ENCODE measurements at regions of chr17 and their contacts with region 1.

Region 1: GRCh38 chr17:81702971-81703746 is at the start of gene MRPL12:
- DNase-seq: peak; percentile 72 to 92
- H3K4me3 ChIP-seq: peak within 1 kb of the TSS; percentile 76 to 96 (median 95)
- H3K27ac ChIP-seq: peak within 1 kb of the TSS; percentile 92
- H3K4me1 ChIP-seq: peaks cover 0 to 14% (median 10%) of the 10 kb centered on the region in 4 experiments; a peak in 5 of 7 replicates
- H3K27me3 ChIP-seq: no peaks in the 10 kb centered on the region
- CTCF ChIP-seq: peak in 1 of 3 experiments; percentile 18; a peak in 1 of 4 replicates
- EP300 ChIP-seq: no peak
- POLR2A ChIP-seq: peak; percentile 83 to 99
- RAD21 ChIP-seq: no peak
- total RNA-seq, gene MRPL12: 120 and 131 TPM in 2 replicates

Region 2: DNA sequence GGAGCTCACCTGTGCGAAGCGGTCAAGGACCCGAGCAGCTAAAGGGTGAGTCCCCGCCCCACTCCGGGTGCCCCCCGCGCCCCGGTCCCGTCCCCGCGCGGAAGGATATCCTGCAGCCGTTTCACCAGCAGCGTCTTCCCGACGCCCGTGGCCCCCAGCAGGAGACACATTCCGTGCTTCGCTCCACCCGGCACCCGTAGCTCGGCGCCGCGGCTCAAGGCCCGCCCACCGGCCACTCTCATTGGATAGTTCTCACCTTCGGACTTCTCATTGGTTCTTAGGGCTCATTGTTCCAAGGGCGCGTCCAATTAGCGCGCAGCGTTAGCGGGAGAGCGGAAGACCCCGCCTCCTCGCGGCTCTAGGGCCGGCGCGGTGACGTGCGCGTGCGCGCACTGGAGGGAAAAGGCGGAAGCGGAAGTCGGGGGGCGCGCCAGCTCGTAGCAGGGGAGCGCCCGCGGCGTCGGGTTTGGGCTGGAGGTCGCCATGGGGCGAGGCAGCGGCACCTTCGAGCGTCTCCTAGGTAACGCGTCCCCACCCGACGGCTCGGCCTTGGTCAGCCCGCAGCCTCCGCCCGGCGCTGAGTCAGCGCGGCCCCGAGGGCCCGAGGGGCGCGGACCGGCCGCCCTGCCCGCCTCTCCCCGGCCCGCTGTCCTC is 19.4 kb before region 1 on chr17 and contains the starts of genes ARL16 and HGS:
- CTCF ChIA-PET with region 1: interaction called, 8 read pairs
- POLR2A ChIA-PET with region 1: interaction called, 436 read pairs
- DNase-seq: peak; percentile 97 to 98
- H3K4me3 ChIP-seq: peak within 1 kb of the TSS; percentile 76 to 89 (median 87)
- H3K27ac ChIP-seq: peak within 1 kb of the TSS; percentile 58
- H3K4me1 ChIP-seq: peaks cover 3 to 14% (median 7%) of the 10 kb centered on the region in 4 experiments; a peak in 6 of 7 replicates
- H3K27me3 ChIP-seq: no peaks in the 10 kb centered on the region; a peak in 1 of 7 replicates
- CTCF ChIP-seq: no peak
- EP300 ChIP-seq: no peak
- POLR2A ChIP-seq: no peak; a peak in 1 of 3 replicates
- RAD21 ChIP-seq: no peak
- total RNA-seq, gene ARL16: 37.0 and 41.8 TPM in 2 replicates
- total RNA-seq, gene HGS: 78.8 and 80.8 TPM in 2 replicates

Region 3: DNA sequence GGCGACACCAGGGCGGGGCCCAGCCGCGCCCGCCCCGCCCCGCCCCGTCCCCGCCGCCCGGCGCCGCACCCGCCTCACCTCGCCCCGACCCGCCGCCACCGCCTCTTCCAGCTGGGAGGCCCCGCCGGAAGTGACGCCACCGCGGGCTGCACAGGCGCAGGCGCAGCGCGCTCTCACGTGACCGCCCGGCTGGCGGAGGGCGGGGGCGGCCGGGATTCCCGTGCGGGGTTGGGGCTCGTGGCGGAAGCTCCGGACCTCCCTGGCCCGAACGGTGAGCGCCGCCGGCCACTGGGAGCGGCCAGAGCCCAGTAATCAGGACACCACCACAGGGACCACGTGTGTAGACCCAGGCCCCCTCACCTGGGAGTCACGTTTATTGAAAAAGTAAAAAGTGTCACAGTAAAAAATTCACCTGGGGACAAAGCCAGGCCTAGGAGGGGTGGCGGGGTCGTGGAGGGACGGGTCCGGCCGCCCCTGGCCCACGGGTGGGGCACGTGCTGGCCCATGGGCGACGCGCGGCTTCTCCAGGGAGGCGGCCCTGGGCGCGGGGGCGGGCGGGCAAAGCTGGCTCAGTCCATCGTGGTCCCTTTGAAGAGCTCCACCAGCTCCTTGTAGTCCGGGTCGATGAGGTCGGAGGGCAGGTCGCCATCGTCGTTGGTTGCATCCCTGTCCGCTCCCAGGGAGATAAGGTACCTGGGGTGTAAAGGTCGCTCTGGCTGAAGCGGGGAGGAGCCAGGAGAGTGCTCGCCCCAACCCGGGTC is 130.2 kb after region 1 on chr17 and contains the start of gene MCRIP1:
- CTCF ChIA-PET with region 1: no interaction called
- POLR2A ChIA-PET with region 1: interaction called, 12 read pairs
- DNase-seq: peak; percentile 60 to 95
- H3K4me3 ChIP-seq: peak within 1 kb of the TSS; percentile 81 to 97 (median 85)
- H3K27ac ChIP-seq: peak within 1 kb of the TSS; percentile 83
- H3K4me1 ChIP-seq: peaks cover 0 to 15% (median 8%) of the 10 kb centered on the region in 4 experiments; a peak in 4 of 7 replicates
- H3K27me3 ChIP-seq: 0 out of 7 replicates have a peak, but pooled peaks cover 0 to 2% (median 0%) of the 10 kb centered on the region in 4 experiments
- CTCF ChIP-seq: 0 out of 4 replicates have a peak, but pooled peaks of 1 of the 3 experiments have one; percentile 1
- EP300 ChIP-seq: 0 out of 3 replicates have a peak, but pooled peaks of 1 of the 2 experiments have one; percentile 27
- POLR2A ChIP-seq: peak in 1 of 2 experiments; percentile 87; a peak in 1 of 3 replicates
- RAD21 ChIP-seq: no peak
- total RNA-seq, gene MCRIP1: 103 and 115 TPM in 2 replicates